GM23248 (cell line): ENCODE measurements at regions of chr12 and their contacts with region 1.

Region 1: GRCh38 chr12:110513842-110514241 is 11.7 kb downstream of the RAD9B start:
- DNase-seq: no peak
- H3K4me3 ChIP-seq: no peak overlapping the region
- H3K27ac ChIP-seq: no peak overlapping the region
- H3K4me1 ChIP-seq: no peaks in the 10 kb centered on the region
- H3K27me3 ChIP-seq: 0 out of 2 replicates have a peak, but pooled peaks cover 2% of the 10 kb centered on the region

Region 2: GRCh38 chr12:110234755-110235154 is 279.1 kb before region 1 on chr12:
- in situ Hi-C with region 1: no loop called
- DNase-seq: peak; percentile 53
- H3K4me3 ChIP-seq: no peak overlapping the region
- H3K27ac ChIP-seq: peak overlapping the region; percentile 12; the same call in 1 of the 2 replicates
- H3K4me1 ChIP-seq: peaks cover 9% of the 10 kb centered on the region; the same call in 1 of the 2 replicates
- H3K27me3 ChIP-seq: no peaks in the 10 kb centered on the region

Region 3: DNA sequence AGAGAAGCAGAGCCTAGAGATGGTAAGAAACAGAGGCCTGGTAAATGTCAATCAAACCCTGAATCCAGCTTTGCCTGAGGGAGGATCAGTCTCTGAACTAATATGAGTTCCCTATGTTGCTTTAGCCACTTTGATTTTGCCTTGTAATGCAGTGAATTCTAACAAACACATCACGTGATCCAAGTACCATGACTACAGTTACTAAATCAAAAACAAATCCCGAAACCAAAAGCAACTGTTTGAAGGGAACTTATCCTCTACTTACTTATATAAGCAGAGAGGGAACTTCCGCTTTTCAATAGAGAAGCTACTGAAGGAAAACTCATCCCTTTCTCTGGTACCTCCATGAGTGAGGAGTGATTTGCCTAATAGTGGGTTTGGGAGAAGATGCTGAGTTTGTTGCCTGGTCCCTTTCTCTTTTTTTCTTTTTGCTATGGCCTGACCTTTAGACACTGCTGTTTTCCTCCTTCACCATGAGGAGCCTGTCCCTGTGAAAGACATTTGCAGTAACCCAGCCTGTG is 77.0 kb after region 1 on chr12:
- in situ Hi-C with region 1: loop called (anchors 10 kb)
- DNase-seq: peak; percentile 79
- H3K4me3 ChIP-seq: no peak overlapping the region
- H3K27ac ChIP-seq: peak overlapping the region; percentile 43
- H3K4me1 ChIP-seq: no peaks in the 10 kb centered on the region
- H3K27me3 ChIP-seq: no peaks in the 10 kb centered on the region; the same call in 1 of the 2 replicates

Region 4: GRCh38 chr12:110888256-110888991 is 374.6 kb after region 1 on chr12:
- in situ Hi-C with region 1: no loop called
- DNase-seq: no peak
- H3K4me3 ChIP-seq: no peak overlapping the region
- H3K27ac ChIP-seq: no peak overlapping the region
- H3K4me1 ChIP-seq: no peaks in the 10 kb centered on the region
- H3K27me3 ChIP-seq: no peaks in the 10 kb centered on the region; the same call in 1 of the 2 replicates